ENCODE measurements at regions of chr13 and their contacts with region 1.

Region 1: GRCh38 chr13:76707360-76707759 is 178.8 kb downstream of the KCTD12 start:
- DNase-seq: no peak
- ATAC-seq: no peak
- H3K4me3 ChIP-seq: no peak overlapping the region
- H3K27ac ChIP-seq: no peak overlapping the region
- H3K4me1 ChIP-seq: peaks cover 0 to 32% (median 19%) of the 10 kb centered on the region in 9 donors
- H3K27me3 ChIP-seq: no peaks in the 10 kb centered on the region
- CTCF ChIP-seq: no peak

Region 2: DNA sequence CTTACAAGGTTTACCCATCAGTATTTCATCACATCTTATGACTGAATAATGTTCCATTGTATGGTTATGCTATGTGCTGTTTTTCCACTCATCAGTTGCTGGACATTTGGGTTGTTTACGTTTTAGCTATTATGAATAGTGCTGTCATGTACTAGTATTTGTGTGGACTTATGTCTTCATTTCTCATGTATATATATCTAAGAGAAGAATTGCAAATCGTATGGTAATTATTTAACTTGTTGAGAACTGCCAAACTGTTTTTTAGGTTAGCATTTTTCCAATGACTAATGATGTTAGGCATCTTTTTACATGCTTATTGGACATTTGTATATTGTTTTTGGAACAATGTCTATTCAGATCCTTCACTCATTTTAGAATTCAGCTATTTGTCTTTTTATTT is 702.9 kb before region 1 on chr13:
- intact Hi-C with region 1: loop called in 1 of 10 experiments (anchors 5 kb)
- DNase-seq: no peak
- ATAC-seq: no peak
- H3K4me3 ChIP-seq: no peak overlapping the region
- H3K27ac ChIP-seq: no peak overlapping the region
- H3K4me1 ChIP-seq: peaks cover 0 to 22% (median 5%) of the 10 kb centered on the region in 9 donors
- H3K27me3 ChIP-seq: no peaks in the 10 kb centered on the region
- CTCF ChIP-seq: no peak

Region 3: DNA sequence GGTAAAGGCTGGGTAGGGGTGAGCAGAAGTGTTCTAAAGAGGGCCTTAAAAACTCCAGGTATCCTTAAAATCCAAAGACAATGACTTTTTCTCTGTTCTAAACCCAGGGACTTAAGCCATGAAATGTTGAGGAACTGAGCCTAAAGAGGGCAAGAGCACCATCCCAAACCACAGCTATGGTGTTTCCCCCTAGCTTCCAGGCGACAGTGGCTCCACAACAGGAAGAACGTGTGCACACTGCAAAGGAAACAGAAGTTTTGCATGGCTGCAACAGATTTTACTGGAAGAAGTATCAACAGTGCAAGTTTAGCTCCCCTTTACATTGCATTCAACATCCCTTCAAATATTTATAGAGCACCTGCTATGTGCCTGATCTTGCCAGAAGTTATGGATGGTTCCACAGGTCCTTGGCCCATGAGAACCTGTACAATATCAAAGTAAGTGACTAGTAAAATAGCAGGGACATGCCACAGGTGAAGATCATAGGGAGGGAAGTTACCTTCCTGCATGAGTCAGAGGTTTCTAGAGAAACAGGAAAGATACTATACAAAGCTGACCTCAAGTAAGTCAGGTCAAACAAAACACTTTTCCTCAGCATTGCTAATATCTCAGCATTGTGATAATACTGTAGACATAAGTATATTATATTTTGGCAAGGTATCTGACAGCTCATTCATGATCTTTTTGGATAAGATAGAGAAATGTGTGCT is 187.2 kb after region 1 on chr13:
- intact Hi-C with region 1: loop called in 1 of 10 experiments (anchors 5 kb)
- DNase-seq: no peak
- ATAC-seq: peak in 4 of 8 donors; percentile 41 to 61 (median 42)
- H3K4me3 ChIP-seq: no peak overlapping the region
- H3K27ac ChIP-seq: no peak overlapping the region
- H3K4me1 ChIP-seq: peaks cover 0 to 15% (median 0%) of the 10 kb centered on the region in 9 donors
- H3K27me3 ChIP-seq: peaks cover 0 to 11% (median 0%) of the 10 kb centered on the region in 7 donors
- CTCF ChIP-seq: peak in 1 of 9 donors; percentile 3

Measured in heart right ventricle (tissue), 16 donors.